ENCODE measurements at regions of chr7 and their contacts with region 1.

Region 1: DNA sequence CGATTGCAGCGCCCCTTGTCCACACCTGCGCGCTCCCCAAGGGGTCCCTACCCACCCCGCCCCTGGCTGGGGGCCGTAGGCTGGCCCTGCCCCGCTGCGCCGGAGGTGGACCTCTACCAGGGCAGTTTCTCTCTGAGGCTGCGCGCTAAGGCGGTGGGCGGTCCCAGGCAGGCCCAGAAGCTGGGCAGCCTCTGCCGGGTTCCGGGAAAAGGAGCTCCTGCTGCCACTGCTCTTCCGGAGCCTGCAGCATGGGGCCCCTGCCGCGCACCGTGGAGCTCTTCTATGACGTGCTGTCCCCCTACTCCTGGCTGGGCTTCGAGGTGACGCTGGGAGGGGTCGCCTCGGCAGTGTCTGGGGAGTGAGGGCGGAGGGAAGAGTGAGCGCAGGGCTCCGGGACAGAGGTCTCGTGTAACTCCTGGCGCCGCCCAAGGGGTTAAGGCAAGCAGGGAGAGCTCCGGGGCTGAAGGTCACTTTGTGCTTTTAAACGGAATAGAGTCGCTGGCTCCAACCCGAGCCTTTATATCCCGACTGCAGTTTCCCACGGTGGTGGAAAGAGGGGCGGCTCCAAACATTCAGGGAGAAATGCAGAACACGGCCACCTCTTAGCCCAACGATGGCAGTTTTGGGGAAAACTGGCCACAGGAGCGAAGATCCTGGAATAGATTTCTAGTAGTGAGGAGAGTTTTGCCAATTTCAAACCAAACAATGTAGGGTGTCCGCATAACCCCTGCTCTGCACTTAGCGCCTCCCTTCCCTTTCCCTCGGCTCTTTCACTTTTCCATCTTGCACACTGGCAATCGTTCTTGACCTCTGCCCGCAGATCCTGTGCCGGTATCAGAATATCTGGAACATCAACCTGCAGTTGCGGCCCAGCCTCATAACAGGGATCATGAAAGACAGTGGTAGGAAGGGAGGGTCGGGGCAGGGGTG is at the start of gene GSTK1:
- DNase-seq: peak; percentile 88 to 89
- ATAC-seq: peak; percentile 98 to 99 (median 98)
- H3K4me3 ChIP-seq: peak within 1 kb of the TSS; percentile 64 to 96 (median 80)
- H3K27ac ChIP-seq: peak within 1 kb of the TSS; percentile 84 to 96 (median 92)
- H3K4me1 ChIP-seq: peaks cover 10 to 36% (median 24%) of the 10 kb centered on the region in 9 donors
- H3K27me3 ChIP-seq: no peaks in the 10 kb centered on the region
- CTCF ChIP-seq: no peak
- total RNA-seq, gene GSTK1: 251 to 294 (median 269) TPM

Region 2: DNA sequence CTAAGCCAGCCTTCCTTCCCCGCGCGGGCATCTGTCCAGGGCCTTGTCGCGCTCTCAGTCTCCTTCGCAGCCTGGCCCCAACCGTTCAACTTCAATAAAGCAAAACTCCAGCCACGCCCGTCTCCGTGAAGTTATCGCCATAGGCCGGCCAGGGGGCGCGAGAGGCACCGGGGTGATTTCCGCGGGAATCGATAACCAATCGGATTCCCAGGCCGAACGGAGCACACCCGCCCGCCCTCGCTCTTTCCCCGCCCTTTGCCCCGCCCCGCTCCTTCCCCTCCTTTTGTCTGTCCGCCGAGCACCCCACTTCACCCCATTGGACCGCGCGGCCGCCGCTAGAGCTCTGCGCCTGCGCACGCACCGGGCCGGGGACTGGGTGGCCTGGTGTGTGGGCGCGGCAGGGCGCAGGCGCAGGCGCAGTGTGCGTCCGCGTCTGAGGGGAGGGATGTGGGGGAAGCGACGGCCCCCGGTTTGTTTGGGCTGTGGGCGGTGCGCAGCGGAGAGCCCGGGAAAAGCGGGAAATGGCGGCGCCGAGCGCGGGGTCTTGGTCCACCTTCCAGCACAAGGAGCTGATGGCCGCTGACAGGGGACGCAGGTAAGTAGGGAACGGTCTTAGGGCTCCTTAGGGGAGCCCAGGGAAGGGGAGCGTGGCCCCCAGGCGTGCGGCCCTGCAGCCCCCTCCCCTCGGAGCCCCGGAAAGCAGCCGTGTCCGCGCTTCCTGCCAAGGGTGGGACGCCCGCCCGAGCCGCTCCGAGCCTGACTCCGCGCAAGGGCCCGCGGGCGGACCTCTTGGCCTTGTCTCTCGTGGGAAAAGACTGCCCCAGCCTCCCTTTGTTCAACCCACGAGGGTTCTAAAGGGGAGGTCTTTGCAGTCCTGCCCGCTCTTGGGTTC is 24.6 kb after region 1 on chr7 and contains the start of gene CASP2:
- intact Hi-C with region 1: loop called in 3 of 10 experiments (anchors 1 to 2 kb)
- DNase-seq: peak; percentile 98 to 99
- ATAC-seq: peak; percentile 96 to 99 (median 97)
- H3K4me3 ChIP-seq: peak within 1 kb of the TSS; percentile 85 to 100 (median 96)
- H3K27ac ChIP-seq: peak within 1 kb of the TSS; percentile 82 to 99 (median 96)
- H3K4me1 ChIP-seq: peaks cover 0 to 68% (median 41%) of the 10 kb centered on the region in 9 donors
- H3K27me3 ChIP-seq: no peaks in the 10 kb centered on the region
- CTCF ChIP-seq: peak in 7 of 9 donors; percentile 26 to 66 (median 51)
- total RNA-seq, gene CASP2: 7.1 to 13.9 (median 10.2) TPM

Region 3: GRCh38 chr7:143299840-143300239 is 36.3 kb after region 1 on chr7:
- intact Hi-C with region 1: loop called in 5 of 10 experiments (anchors 5 kb)
- DNase-seq: peak in 1 of 2 donors; percentile 24
- ATAC-seq: peak in 6 of 8 donors; percentile 42 to 73 (median 64)
- H3K4me3 ChIP-seq: no peak overlapping the region
- H3K27ac ChIP-seq: peak overlapping the region in 8 of 10 donors; percentile 6 to 54 (median 39)
- H3K4me1 ChIP-seq: peaks cover 0 to 52% (median 25%) of the 10 kb centered on the region in 9 donors
- H3K27me3 ChIP-seq: no peaks in the 10 kb centered on the region
- CTCF ChIP-seq: peak; percentile 13 to 66 (median 56)

Region 4: DNA sequence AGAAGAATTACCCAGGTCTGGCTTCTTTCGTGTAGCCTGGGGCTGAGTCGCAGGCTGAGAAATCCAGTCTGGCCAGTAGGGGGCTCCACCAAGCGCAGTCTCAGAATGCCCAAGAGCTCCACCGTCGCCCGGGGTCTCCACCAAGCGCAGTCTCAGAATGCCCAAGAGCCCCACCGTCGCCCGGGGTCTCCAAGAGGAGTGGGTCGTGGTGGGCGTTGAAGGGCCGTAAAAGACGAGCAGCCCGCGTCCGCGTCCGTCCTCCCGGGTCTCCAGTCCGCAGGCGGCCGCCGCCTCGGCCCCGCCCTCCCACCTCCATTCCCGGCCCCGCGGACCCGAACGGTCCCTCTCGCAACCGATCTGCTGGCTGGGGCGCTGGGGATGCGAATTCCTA is 116.7 kb after region 1 on chr7:
- intact Hi-C with region 1: loop called in 2 of 10 experiments (anchors 5 to 10 kb)
- DNase-seq: peak; percentile 89 to 91
- ATAC-seq: peak; percentile 60 to 88 (median 76)
- H3K4me3 ChIP-seq: peak overlapping the region; percentile 79 to 100 (median 96)
- H3K27ac ChIP-seq: peak overlapping the region; percentile 97 to 100 (median 100)
- H3K4me1 ChIP-seq: peaks cover 8 to 82% (median 45%) of the 10 kb centered on the region in 9 donors
- H3K27me3 ChIP-seq: no peaks in the 10 kb centered on the region
- CTCF ChIP-seq: peak; percentile 85 to 95 (median 92)

Measured in heart right ventricle (tissue), 16 donors.